Natural killer cell (primary cell): ENCODE measurements at regions of chr1 and their contacts with region 1.

Region 1: DNA sequence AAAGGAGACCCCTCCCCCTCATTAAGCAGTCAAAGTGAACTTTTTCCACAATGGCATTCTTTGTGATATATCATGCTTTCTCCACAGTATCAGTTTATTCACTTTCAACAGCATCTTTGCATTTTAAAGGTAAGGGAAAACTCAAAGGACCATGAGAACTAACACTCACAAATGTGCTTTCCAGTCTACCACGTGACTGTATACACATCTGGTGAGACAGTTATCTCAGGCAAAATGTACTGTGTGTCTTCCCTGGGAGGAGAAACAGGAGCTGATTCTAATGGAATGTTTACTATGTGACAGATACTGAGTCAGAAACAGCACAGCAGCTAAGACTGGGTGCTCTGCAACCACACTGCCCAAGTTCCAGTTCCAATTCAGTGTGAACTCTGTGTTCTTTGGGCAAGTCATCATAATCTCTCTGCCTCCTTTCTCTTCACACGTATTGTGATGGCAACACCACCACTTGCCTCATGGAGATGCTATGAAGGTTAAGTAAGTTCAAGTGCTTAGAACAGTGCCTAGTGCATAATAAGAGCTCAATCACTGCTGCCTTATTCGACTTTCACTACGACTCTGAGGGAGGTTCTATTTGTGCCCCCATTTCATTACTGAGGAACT is 79.0 kb downstream of the SLC45A1 start:
- DNase-seq: peak in 1 of 2 donors; percentile 49
- ATAC-seq: peak; percentile 82 to 88 (median 83)
- H3K4me3 ChIP-seq: no peak overlapping the region
- H3K4me3 Mint-ChIP-seq: peak overlapping the region; percentile 68
- H3K27ac ChIP-seq: no peak overlapping the region
- H3K27ac Mint-ChIP-seq: peak overlapping the region; percentile 22 to 67
- H3K4me1 ChIP-seq: peaks cover 28% of the 10 kb centered on the region
- H3K4me1 Mint-ChIP-seq: peaks cover 46 to 50% of the 10 kb centered on the region in 2 donors
- H3K27me3 ChIP-seq: no peaks in the 10 kb centered on the region
- H3K27me3 Mint-ChIP-seq: no peaks in the 10 kb centered on the region
- CTCF ChIP-seq: no peak

Region 2: GRCh38 chr1:8431019-8431418 is 34.1 kb after region 1 on chr1:
- intact Hi-C with region 1: loop called (anchors 5 kb)
- DNase-seq: peak in 1 of 2 donors; percentile 71
- ATAC-seq: peak in 2 of 3 donors; percentile 30 to 38
- H3K4me3 ChIP-seq: no peak overlapping the region
- H3K4me3 Mint-ChIP-seq: peak overlapping the region; percentile 62
- H3K27ac ChIP-seq: peak overlapping the region; percentile 18
- H3K27ac Mint-ChIP-seq: peak overlapping the region in 1 of 2 donors; percentile 54
- H3K4me1 ChIP-seq: peaks cover 44% of the 10 kb centered on the region
- H3K4me1 Mint-ChIP-seq: peaks cover 65% of the 10 kb centered on the region in 2 donors
- H3K27me3 ChIP-seq: no peaks in the 10 kb centered on the region
- H3K27me3 Mint-ChIP-seq: peaks cover 18 to 22% of the 10 kb centered on the region in 2 donors
- CTCF ChIP-seq: no peak

Region 3: GRCh38 chr1:8727809-8728213 is 330.9 kb after region 1 on chr1:
- intact Hi-C with region 1: no loop called
- DNase-seq: no peak
- ATAC-seq: no peak
- H3K4me3 ChIP-seq: no peak overlapping the region
- H3K4me3 Mint-ChIP-seq: no peak overlapping the region
- H3K27ac ChIP-seq: no peak overlapping the region
- H3K27ac Mint-ChIP-seq: peak overlapping the region in 1 of 2 donors; percentile 19
- H3K4me1 ChIP-seq: peaks cover 3% of the 10 kb centered on the region
- H3K4me1 Mint-ChIP-seq: peaks cover 9 to 21% of the 10 kb centered on the region in 2 donors
- H3K27me3 ChIP-seq: no peaks in the 10 kb centered on the region
- H3K27me3 Mint-ChIP-seq: no peaks in the 10 kb centered on the region
- CTCF ChIP-seq: no peak